Colonic mucosa (tissue), 4 donors: ENCODE measurements at regions of chr11 and their contacts with region 1.

Region 1: DNA sequence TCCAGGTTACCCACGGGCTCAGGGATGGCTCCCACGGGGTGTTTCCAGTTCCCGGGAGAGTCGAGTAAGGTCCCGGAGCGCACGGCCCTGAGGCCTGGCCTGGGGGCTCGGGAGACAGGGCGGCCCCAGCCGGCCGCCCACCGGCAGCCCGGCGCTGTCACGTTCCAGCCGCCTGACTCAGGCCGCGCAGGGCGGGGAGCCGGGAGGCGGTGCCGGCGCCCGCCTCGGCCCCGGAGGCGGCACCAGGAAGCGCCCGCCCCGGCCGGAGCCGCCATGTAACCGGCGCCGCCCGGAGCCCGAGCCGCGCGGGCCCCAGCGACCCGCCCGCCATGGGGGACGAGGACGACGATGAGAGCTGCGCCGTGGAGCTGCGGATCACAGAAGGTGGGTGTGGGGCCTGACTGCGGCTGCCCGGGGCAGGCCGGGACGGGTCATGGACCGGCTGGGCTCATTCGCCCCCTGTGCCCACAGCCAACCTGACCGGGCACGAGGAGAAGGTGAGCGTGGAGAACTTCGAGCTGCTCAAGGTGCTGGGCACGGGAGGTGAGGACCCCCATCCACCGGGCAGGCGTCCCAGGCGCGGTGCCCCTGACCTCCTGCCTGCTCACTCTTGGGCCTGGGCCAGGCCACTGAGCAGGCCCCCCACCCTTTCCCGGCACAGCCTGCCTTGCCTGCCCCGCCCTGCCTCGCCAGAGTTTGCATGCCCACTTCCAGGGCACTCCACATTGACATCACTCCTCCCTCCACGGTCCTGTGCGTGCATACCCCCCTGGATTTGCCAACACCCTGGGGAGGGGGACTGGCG is at the start of gene RPS6KA4:
- DNase-seq: peak; percentile 61
- H3K4me3 ChIP-seq: peak within 1 kb of the TSS; percentile 93
- H3K27ac ChIP-seq: peak within 1 kb of the TSS; percentile 75
- H3K4me1 ChIP-seq: peaks cover 23% of the 10 kb centered on the region
- H3K27me3 ChIP-seq: no peaks in the 10 kb centered on the region
- CTCF ChIP-seq: no peak
- total RNA-seq, gene RPS6KA4: 28.9 to 59.1 TPM

Region 2: GRCh38 chr11:64304316-64305072 is 54.6 kb before region 1 on chr11:
- intact Hi-C with region 1: no loop called
- DNase-seq: peak; percentile 97
- H3K4me3 ChIP-seq: peak overlapping the region; percentile 45
- H3K27ac ChIP-seq: peak overlapping the region; percentile 99
- H3K4me1 ChIP-seq: peaks cover 28% of the 10 kb centered on the region
- H3K27me3 ChIP-seq: peaks cover 8% of the 10 kb centered on the region
- CTCF ChIP-seq: peak; percentile 84

Region 3: DNA sequence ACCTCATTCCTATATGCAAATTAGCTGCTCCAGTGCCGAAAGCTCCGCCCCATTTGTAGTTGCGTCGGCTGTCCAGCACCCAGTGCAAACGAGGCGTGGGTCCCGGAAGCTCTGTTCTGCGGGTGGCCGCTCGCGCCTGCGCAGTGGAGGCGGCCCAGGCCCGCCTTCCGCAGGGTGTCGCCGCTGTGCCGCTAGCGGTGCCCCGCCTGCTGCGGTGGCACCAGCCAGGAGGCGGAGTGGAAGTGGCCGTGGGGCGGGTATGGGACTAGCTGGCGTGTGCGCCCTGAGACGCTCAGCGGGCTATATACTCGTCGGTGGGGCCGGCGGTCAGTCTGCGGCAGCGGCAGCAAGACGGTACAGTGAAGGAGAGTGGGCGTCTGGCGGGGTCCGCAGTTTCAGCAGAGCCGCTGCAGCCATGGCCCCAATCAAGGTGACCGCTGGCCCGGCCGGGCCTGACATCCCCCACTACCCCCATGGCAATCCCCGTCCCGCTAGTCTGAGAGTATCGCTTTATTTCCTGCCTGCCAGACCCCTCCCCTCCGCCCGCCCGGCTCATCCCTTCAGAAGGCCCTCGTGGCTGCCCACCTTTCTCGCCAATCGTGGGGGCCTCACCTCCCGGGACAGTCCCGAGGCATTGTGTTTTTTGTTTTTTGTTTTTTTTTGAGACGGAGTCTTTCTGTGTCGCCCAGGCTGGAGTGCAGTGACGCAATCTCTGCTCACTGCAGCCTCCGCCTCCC is 41.0 kb before region 1 on chr11 and contains the start of gene PRDX5:
- intact Hi-C with region 1: loop called (anchors 5 kb)
- DNase-seq: peak; percentile 96
- H3K4me3 ChIP-seq: peak within 1 kb of the TSS; percentile 76
- H3K27ac ChIP-seq: peak within 1 kb of the TSS; percentile 99
- H3K4me1 ChIP-seq: peaks cover 22% of the 10 kb centered on the region
- H3K27me3 ChIP-seq: no peaks in the 10 kb centered on the region
- CTCF ChIP-seq: peak; percentile 24
- total RNA-seq, gene PRDX5: 301 to 425 TPM